Ascending aorta (tissue), 2 donors: ENCODE measurements at regions of chr2 and their contacts with region 1.

Region 1: GRCh38 chr2:172465417-172466334 is 38.3 kb downstream of the ITGA6 start:
- DNase-seq: peak in 1 of 2 donors; percentile 79
- H3K4me3 ChIP-seq: peak overlapping the region; percentile 20 to 21
- H3K27ac ChIP-seq: no peak overlapping the region
- H3K4me1 ChIP-seq: no peaks in the 10 kb centered on the region
- H3K27me3 ChIP-seq: no peaks in the 10 kb centered on the region
- CTCF ChIP-seq: peak; percentile 71 to 89 (median 87)

Region 2: DNA sequence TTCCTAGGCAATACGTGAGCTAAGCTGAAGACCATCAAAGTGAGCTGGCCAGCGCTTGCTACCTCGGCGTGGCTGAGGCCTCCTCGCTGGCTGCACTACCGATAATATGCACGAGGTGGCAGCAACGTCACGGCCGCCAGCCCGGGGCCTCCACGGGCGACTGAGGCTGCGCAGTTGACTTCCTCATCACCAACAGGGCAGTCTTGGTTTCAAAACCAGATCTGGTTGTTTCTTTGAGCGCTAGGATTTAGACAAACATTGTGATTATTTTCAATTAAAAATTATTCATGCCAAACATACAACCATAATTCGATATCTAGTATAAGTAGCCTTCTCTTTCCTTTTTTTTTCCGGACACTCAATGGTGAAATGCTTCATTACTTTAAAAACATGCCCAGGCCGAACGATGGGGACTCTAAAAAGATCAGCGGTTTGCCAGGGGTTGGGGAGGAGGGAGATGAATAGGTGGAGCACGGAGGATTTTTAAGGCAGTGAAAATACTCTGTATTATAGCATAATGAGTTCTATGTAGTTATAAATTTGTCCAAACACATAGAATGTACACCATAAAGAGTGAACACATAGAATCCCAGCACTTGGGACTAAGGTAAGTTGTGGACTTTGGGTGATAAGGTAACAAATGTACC is 891.4 kb before region 1 on chr2:
- intact Hi-C with region 1: loop called (anchors 10 kb)
- DNase-seq: peak in 1 of 2 donors; percentile 88
- H3K4me3 ChIP-seq: peak overlapping the region in 1 of 2 donors; percentile 21
- H3K27ac ChIP-seq: no peak overlapping the region
- H3K4me1 ChIP-seq: no peaks in the 10 kb centered on the region
- H3K27me3 ChIP-seq: no peaks in the 10 kb centered on the region
- CTCF ChIP-seq: peak; percentile 78 to 99 (median 98)

Region 3: DNA sequence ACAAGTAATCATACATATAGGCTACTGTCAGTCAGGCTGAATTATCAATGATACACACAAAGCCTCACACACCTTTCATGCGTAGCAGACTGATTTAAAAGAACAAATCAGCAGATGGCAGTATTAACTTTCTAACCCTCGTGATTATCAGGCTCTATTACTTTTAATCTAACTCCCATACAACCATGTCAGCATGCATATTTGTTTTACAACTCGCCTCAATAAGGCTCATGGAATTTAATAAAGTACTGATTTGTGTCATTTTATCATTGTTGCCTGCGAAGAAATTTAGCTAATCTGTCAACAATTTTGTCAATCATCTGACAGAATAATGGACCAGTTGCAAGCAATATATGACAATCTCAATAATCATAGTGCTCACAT is 654.4 kb before region 1 on chr2:
- intact Hi-C with region 1: loop called (anchors 10 kb)
- DNase-seq: no peak
- H3K4me3 ChIP-seq: no peak overlapping the region
- H3K27ac ChIP-seq: no peak overlapping the region
- H3K4me1 ChIP-seq: no peaks in the 10 kb centered on the region
- H3K27me3 ChIP-seq: no peaks in the 10 kb centered on the region
- CTCF ChIP-seq: peak in 2 of 3 experiments; percentile 5 to 38

Region 4: GRCh38 chr2:172172513-172173173 is 293.0 kb before region 1 on chr2:
- intact Hi-C with region 1: loop called (anchors 1 kb)
- DNase-seq: peak in 1 of 2 donors; percentile 73
- H3K4me3 ChIP-seq: peak overlapping the region; percentile 52 to 64
- H3K27ac ChIP-seq: no peak overlapping the region
- H3K4me1 ChIP-seq: peaks cover 0 to 4% of the 10 kb centered on the region in 2 donors
- H3K27me3 ChIP-seq: no peaks in the 10 kb centered on the region
- CTCF ChIP-seq: peak; percentile 64 to 86 (median 84)

Region 5: GRCh38 chr2:172416447-172417058 is 49.1 kb before region 1 on chr2:
- intact Hi-C with region 1: no loop called
- DNase-seq: no peak
- H3K4me3 ChIP-seq: no peak overlapping the region
- H3K27ac ChIP-seq: no peak overlapping the region
- H3K4me1 ChIP-seq: no peaks in the 10 kb centered on the region
- H3K27me3 ChIP-seq: no peaks in the 10 kb centered on the region
- CTCF ChIP-seq: no peak